Dorsolateral prefrontal cortex (tissue), 120 donors: ENCODE measurements at regions of chr6 and their contacts with region 1.

Region 1: DNA sequence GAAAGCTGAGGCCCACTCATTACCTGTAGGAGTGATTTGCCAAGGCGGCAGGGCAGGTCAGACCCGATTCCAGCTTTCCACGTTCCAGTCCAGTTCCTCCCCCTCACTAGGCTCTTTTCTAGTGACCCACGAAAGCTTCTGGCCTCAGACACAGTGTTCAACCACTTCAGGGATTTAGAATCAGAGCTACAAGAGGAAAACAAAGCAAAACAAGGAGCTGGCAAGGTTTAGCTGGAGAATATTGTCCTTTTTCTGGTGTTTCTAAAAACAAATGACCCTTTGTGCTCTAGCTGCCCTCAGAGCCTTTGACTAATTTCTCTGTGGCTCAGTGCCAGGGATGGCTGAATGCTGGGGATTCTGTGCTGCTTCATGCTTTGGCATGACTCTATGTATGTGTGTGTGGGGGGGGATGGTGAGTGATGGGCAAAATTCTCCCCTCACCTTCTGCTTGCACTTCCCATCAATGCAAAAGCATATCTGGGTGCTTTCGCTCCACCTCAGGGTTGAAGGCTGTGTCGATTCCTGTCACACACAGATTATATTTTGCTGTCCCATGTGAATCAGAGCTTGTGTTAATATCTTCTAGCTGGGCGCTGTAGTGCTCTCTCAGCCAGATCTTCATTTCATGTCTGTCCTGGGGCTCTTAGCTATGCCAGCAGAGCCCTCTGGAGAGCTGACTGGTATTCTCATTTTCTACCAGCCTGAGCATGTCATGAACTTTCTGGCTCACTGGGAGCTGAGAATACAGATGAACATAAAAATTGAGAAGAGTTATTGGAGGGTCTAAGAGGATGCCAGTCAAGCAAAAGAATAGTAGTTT is 19.3 kb upstream of the NEDD9 start:
- DNase-seq: peak; percentile 49 to 78 (median 65)
- H3K4me3 ChIP-seq: peak overlapping the region in 28 of 59 donors; percentile 1 to 39 (median 14)
- H3K27ac ChIP-seq: peak overlapping the region in 50 of 59 donors; percentile 1 to 76 (median 46)
- H3K27me3 ChIP-seq: no peaks in the 10 kb centered on the region
- CTCF ChIP-seq: peak in 9 of 56 donors; percentile 2 to 45 (median 13)

Region 2: GRCh38 chr6:11202513-11203305 is 49.0 kb before region 1 on chr6:
- intact Hi-C with region 1: loop called in 1 of 2 experiments (anchors 5 kb)
- DNase-seq: peak in 7 of 10 donors; percentile 31 to 69 (median 54)
- H3K4me3 ChIP-seq: peak overlapping the region in 37 of 59 donors; percentile 0 to 54 (median 19)
- H3K27ac ChIP-seq: peak overlapping the region in 43 of 59 donors; percentile 1 to 79 (median 46)
- H3K27me3 ChIP-seq: no peaks in the 10 kb centered on the region
- CTCF ChIP-seq: peak in 9 of 56 donors; percentile 7 to 38 (median 18)